ENCODE measurements at regions of chr3 and their contacts with region 1.

Region 1: GRCh38 chr3:8899986-8900385 is 63.3 kb downstream of the RAD18 start:
- DNase-seq: no peak
- ATAC-seq: no peak
- H3K4me3 ChIP-seq: no peak overlapping the region
- H3K4me3 Mint-ChIP-seq: no peak overlapping the region
- H3K27ac ChIP-seq: no peak overlapping the region
- H3K27ac Mint-ChIP-seq: no peak overlapping the region
- H3K4me1 ChIP-seq: no peaks in the 10 kb centered on the region
- H3K4me1 Mint-ChIP-seq: no peaks in the 10 kb centered on the region
- H3K27me3 ChIP-seq: no peaks in the 10 kb centered on the region
- H3K27me3 Mint-ChIP-seq: no peaks in the 10 kb centered on the region

Region 2: DNA sequence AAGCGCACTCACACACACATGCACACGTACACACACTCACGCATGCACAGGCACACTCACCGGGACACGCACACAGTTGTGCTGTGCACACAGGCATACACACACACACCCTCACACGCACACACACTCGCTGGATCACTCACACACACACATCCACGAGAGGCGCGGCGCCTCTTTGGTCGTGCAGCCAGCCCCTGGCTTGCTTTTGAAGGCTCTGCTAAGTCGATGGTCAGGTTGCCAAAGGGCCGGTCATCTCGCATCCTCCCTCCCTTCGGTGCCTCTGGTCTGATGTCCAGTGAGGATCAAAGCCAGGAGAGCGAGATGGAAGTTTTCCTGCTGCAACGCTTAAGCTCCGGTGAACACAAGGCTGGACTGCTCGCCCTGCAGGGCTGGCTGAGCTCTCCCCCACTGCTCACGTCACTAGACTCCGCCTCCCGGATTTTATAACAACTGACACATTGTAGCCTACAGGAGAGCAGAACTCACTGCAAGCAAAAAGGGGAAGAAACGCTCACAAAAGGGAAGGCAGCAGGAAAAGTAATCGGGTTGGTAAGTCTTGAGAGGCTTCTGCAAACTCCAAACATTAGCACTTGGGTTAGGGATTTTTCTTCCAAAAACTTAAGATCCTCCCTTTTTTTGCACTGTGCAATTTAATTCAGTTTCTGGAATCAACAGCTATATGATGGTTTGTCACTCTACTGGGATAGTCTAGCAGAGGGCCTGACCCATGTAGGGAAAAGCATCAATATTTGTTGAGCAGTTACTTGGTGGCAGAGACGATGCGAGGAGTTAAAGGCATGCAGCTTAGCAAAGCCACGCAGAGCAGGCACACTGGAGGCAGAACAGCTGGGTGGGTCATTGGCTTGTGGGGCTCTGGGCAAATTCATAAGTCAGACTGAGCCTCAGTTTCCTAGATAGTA is 349.5 kb after region 1 on chr3 and contains the start of gene SRGAP3:
- CTCF ChIA-PET with region 1: no interaction called
- POLR2A ChIA-PET with region 1: no interaction called
- intact Hi-C with region 1: no loop called
- DNase-seq: peak; percentile 45 to 85 (median 80)
- ATAC-seq: peak; percentile 99
- H3K4me3 ChIP-seq: peak within 1 kb of the TSS; percentile 91
- H3K4me3 Mint-ChIP-seq: peak within 1 kb of the TSS; percentile 82 to 99 (median 92)
- H3K27ac ChIP-seq: peak within 1 kb of the TSS; percentile 60
- H3K27ac Mint-ChIP-seq: peak within 1 kb of the TSS; percentile 3 to 89 (median 78)
- H3K4me1 ChIP-seq: peaks cover 0 to 6% of the 10 kb centered on the region in 2 donors
- H3K4me1 Mint-ChIP-seq: peaks cover 9 to 43% (median 28%) of the 10 kb centered on the region in 7 donors
- H3K27me3 ChIP-seq: no peaks in the 10 kb centered on the region
- H3K27me3 Mint-ChIP-seq: peaks cover 0 to 29% (median 4%) of the 10 kb centered on the region in 5 donors
- total RNA-seq, gene SRGAP3: 1.4 to 6.0 (median 4.8) TPM

Region 3: GRCh38 chr3:9439331-9439730 is 539.3 kb after region 1 on chr3:
- CTCF ChIA-PET with region 1: no interaction called
- POLR2A ChIA-PET with region 1: interaction called, 10 read pairs
- intact Hi-C with region 1: no loop called
- DNase-seq: no peak
- ATAC-seq: no peak
- H3K4me3 ChIP-seq: no peak overlapping the region
- H3K4me3 Mint-ChIP-seq: no peak overlapping the region
- H3K27ac ChIP-seq: no peak overlapping the region
- H3K27ac Mint-ChIP-seq: peak overlapping the region in 2 of 9 donors; percentile 10 to 42
- H3K4me1 ChIP-seq: no peaks in the 10 kb centered on the region
- H3K4me1 Mint-ChIP-seq: peaks cover 0 to 16% (median 9%) of the 10 kb centered on the region in 7 donors
- H3K27me3 ChIP-seq: no peaks in the 10 kb centered on the region
- H3K27me3 Mint-ChIP-seq: no peaks in the 10 kb centered on the region

Measured in naive thymus-derived CD4-positive, alpha-beta T cell (primary cell).